PC-3 (cell line): ENCODE measurements at regions of chr20 and their contacts with region 1.

Region 1: GRCh38 chr20:58481481-58482021 is 33.6 kb downstream of the APCDD1L start:
- DNase-seq: peak; percentile 86
- ATAC-seq: peak; percentile 89
- H3K4me3 ChIP-seq: no peak overlapping the region
- H3K27ac ChIP-seq: no peak overlapping the region
- H3K4me1 ChIP-seq: peaks cover 5% of the 10 kb centered on the region
- H3K27me3 ChIP-seq: no peaks in the 10 kb centered on the region
- CTCF ChIP-seq: peak; percentile 99

Region 2: DNA sequence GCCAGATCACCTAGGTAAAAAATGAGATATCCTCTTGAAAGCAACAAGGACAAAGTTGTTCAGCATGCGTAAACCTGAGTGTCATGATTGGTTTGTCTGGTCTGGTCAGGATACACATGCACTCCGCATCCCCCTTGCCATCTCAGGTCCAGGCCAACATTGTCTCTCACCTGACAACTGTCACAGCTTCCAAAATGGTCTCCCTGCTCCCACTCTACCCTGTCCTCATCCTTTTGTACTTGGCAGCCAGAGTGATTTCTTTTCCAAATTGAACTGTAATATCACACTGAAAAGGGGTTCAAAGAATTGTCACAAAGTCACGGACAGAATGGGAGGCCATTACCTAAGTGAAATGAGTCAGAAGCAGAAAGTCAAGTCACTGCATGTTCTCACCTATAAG is 54.8 kb after region 1 on chr20:
- CTCF ChIA-PET with region 1: no interaction called
- POLR2A ChIA-PET with region 1: no interaction called
- intact Hi-C with region 1: no loop called
- DNase-seq: no peak
- ATAC-seq: no peak
- H3K4me3 ChIP-seq: no peak overlapping the region
- H3K27ac ChIP-seq: no peak overlapping the region
- H3K4me1 ChIP-seq: peaks cover 12% of the 10 kb centered on the region
- H3K27me3 ChIP-seq: no peaks in the 10 kb centered on the region
- CTCF ChIP-seq: no peak

Region 3: GRCh38 chr20:58669287-58670006 is 187.9 kb after region 1 on chr20:
- CTCF ChIA-PET with region 1: no interaction called
- POLR2A ChIA-PET with region 1: no interaction called
- intact Hi-C with region 1: no loop called
- DNase-seq: no peak
- ATAC-seq: no peak
- H3K4me3 ChIP-seq: no peak overlapping the region
- H3K27ac ChIP-seq: no peak overlapping the region
- H3K4me1 ChIP-seq: no peaks in the 10 kb centered on the region
- H3K27me3 ChIP-seq: no peaks in the 10 kb centered on the region
- CTCF ChIP-seq: no peak

Region 4: DNA sequence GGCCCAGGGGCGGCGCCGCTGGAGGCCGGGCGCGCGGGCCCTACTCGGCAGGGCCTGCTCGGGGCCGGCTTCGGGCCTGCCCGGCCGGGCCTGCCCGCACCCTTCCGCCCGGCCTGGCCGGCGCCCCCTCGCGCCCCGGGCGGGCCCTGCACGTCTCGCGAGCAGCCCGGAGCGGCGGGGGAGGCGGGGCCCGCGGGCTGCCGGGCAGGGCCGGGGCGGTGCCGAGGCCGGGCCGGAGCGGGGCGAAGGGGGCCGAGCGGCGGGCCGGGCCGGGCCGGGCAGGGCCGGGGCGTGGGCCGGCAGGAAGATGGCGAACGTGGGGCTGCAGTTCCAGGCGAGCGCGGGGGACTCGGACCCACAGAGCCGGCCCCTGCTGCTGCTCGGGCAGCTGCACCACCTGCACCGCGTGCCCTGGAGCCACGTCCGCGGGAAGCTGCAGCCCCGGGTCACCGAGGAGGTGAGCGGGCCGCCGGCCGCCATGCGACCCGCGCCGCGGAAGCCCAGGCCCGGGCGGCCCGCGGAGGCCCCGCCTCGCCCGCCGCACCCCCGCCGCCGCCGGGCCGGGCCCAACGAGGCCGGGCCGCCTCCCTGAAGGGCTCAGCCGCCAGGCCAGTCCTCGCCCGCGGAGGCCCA is 211.2 kb after region 1 on chr20 and contains the start of gene NPEPL1:
- CTCF ChIA-PET with region 1: interaction called, 4 read pairs
- POLR2A ChIA-PET with region 1: no interaction called
- intact Hi-C with region 1: loop called (anchors 2 kb)
- DNase-seq: peak; percentile 88
- ATAC-seq: peak; percentile 91
- H3K4me3 ChIP-seq: peak within 1 kb of the TSS; percentile 74
- H3K27ac ChIP-seq: peak within 1 kb of the TSS; percentile 33
- H3K4me1 ChIP-seq: peaks cover 17% of the 10 kb centered on the region
- H3K27me3 ChIP-seq: no peaks in the 10 kb centered on the region
- CTCF ChIP-seq: no peak
- total RNA-seq, gene NPEPL1: 49.7 and 53.1 TPM in 2 replicates

Region 5: DNA sequence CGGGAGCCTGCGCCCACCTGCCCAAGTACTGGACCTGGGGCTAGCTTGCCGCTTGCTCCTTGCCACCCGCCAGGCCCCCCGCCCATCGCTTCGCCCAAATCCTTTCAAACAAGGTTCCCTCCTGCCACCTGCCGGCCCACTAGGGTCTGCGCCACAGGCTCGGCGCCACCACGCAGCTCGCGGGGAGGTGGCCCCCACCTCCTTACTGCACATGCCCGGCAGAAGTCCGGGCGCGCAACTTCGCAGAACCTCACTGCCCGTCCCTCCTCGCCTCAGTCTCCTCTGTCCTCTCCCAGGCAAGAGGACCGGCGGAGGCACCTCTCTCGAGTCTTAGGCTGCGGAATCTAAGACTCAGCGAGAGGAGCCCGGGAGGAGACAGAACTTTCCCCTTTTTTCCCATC is 357.9 kb after region 1 on chr20:
- CTCF ChIA-PET with region 1: interaction called, 7 read pairs
- POLR2A ChIA-PET with region 1: no interaction called
- intact Hi-C with region 1: loop called (anchors 1 kb)
- DNase-seq: peak; percentile 71
- ATAC-seq: peak; percentile 87
- H3K4me3 ChIP-seq: peak overlapping the region; percentile 61
- H3K27ac ChIP-seq: no peak overlapping the region
- H3K4me1 ChIP-seq: no peaks in the 10 kb centered on the region
- H3K27me3 ChIP-seq: peaks cover 38% of the 10 kb centered on the region
- CTCF ChIP-seq: peak; percentile 90

Region 6: GRCh38 chr20:60224914-60225313 is 1743.4 kb after region 1 on chr20:
- CTCF ChIA-PET with region 1: no interaction called
- POLR2A ChIA-PET with region 1: no interaction called
- intact Hi-C with region 1: no loop called
- DNase-seq: peak; percentile 33
- ATAC-seq: no peak
- H3K4me3 ChIP-seq: no peak overlapping the region
- H3K27ac ChIP-seq: no peak overlapping the region
- H3K4me1 ChIP-seq: no peaks in the 10 kb centered on the region
- H3K27me3 ChIP-seq: 0 out of 2 replicates have a peak, but pooled peaks cover 6% of the 10 kb centered on the region
- CTCF ChIP-seq: peak; percentile 51